ENCODE measurements at regions of chr7 and their contacts with region 1.

Region 1: GRCh38 chr7:12686894-12687717 is at the start of gene ARL4A:
- DNase-seq: peak; percentile 69 to 90 (median 81)
- ATAC-seq: peak; percentile 53 to 73 (median 67)
- H3K4me3 ChIP-seq: peak within 1 kb of the TSS; percentile 82 to 87
- H3K4me3 Mint-ChIP-seq: peak within 1 kb of the TSS; percentile 93 to 95 (median 95)
- H3K27ac ChIP-seq: peak within 1 kb of the TSS; percentile 97
- H3K27ac Mint-ChIP-seq: peak within 1 kb of the TSS; percentile 93 to 95
- H3K4me1 ChIP-seq: peaks cover 4 to 7% of the 10 kb centered on the region in 2 experiments
- H3K4me1 Mint-ChIP-seq: peaks cover 33 to 45% (median 41%) of the 10 kb centered on the region in 3 donors
- H3K27me3 ChIP-seq: no peaks in the 10 kb centered on the region
- H3K27me3 Mint-ChIP-seq: no peaks in the 10 kb centered on the region
- total RNA-seq, gene ARL4A: 7.0 to 98.2 (median 13.6) TPM

Region 2: GRCh38 chr7:12601302-12601869 is 85.7 kb before region 1 on chr7:
- CTCF ChIA-PET with region 1: no interaction called
- POLR2A ChIA-PET with region 1: no interaction called
- DNase-seq: no peak
- ATAC-seq: no peak
- H3K4me3 ChIP-seq: no peak overlapping the region
- H3K4me3 Mint-ChIP-seq: no peak overlapping the region
- H3K27ac ChIP-seq: no peak overlapping the region
- H3K27ac Mint-ChIP-seq: no peak overlapping the region
- H3K4me1 ChIP-seq: no peaks in the 10 kb centered on the region
- H3K4me1 Mint-ChIP-seq: no peaks in the 10 kb centered on the region
- H3K27me3 ChIP-seq: no peaks in the 10 kb centered on the region
- H3K27me3 Mint-ChIP-seq: peaks cover 0 to 7% of the 10 kb centered on the region in 2 donors

Region 3: DNA sequence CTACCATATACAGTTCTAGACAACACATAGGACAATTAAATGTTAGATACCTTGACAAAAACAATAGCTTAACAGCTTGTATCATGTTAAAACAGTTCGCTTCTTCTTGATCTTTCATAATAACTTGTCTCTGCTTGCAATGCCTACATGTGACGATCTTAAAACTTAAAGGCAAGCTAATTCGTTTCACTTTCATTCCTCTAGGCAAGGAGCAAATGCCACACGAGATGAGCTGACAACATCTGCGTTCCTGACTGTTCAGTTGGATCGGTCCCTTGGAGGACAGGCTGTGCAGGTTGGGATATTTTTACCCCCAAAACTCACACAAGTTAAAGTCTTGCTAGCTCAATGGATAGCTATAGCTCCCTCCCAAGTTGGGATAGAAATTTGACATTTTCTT is 51.3 kb before region 1 on chr7:
- CTCF ChIA-PET with region 1: interaction called, 9 to 10 read pairs
- POLR2A ChIA-PET with region 1: interaction called in 1 of 2 experiments, 18 read pairs
- DNase-seq: peak in 4 of 35 experiments; percentile 0 to 60 (median 6)
- ATAC-seq: peak in 3 of 4 experiments; percentile 54 to 77 (median 72)
- H3K4me3 ChIP-seq: peak overlapping the region in 1 of 2 donors; percentile 33
- H3K4me3 Mint-ChIP-seq: peak overlapping the region; percentile 64 to 82 (median 73)
- H3K27ac ChIP-seq: peak overlapping the region; percentile 42
- H3K27ac Mint-ChIP-seq: peak overlapping the region; percentile 80 to 81
- H3K4me1 ChIP-seq: peaks cover 0 to 3% of the 10 kb centered on the region in 2 experiments
- H3K4me1 Mint-ChIP-seq: peaks cover 21 to 35% (median 28%) of the 10 kb centered on the region in 3 donors
- H3K27me3 ChIP-seq: no peaks in the 10 kb centered on the region
- H3K27me3 Mint-ChIP-seq: no peaks in the 10 kb centered on the region

Region 4: GRCh38 chr7:12674849-12675248 is 12.3 kb before region 1 on chr7:
- CTCF ChIA-PET with region 1: interaction called, 5 to 17 read pairs
- POLR2A ChIA-PET with region 1: interaction called in 1 of 2 experiments, 14 read pairs
- DNase-seq: peak in 30 of 35 experiments; percentile 5 to 82 (median 40)
- ATAC-seq: peak; percentile 69 to 90 (median 77)
- H3K4me3 ChIP-seq: no peak overlapping the region
- H3K4me3 Mint-ChIP-seq: no peak overlapping the region
- H3K27ac ChIP-seq: peak overlapping the region; percentile 36
- H3K27ac Mint-ChIP-seq: peak overlapping the region in 1 of 2 donors; percentile 12
- H3K4me1 ChIP-seq: no peaks in the 10 kb centered on the region
- H3K4me1 Mint-ChIP-seq: peaks cover 10 to 20% (median 12%) of the 10 kb centered on the region in 3 donors
- H3K27me3 ChIP-seq: no peaks in the 10 kb centered on the region
- H3K27me3 Mint-ChIP-seq: no peaks in the 10 kb centered on the region

Measured in T-cell (primary cell).